ENCODE measurements at regions of chr9 and their contacts with region 1.

Region 1: DNA sequence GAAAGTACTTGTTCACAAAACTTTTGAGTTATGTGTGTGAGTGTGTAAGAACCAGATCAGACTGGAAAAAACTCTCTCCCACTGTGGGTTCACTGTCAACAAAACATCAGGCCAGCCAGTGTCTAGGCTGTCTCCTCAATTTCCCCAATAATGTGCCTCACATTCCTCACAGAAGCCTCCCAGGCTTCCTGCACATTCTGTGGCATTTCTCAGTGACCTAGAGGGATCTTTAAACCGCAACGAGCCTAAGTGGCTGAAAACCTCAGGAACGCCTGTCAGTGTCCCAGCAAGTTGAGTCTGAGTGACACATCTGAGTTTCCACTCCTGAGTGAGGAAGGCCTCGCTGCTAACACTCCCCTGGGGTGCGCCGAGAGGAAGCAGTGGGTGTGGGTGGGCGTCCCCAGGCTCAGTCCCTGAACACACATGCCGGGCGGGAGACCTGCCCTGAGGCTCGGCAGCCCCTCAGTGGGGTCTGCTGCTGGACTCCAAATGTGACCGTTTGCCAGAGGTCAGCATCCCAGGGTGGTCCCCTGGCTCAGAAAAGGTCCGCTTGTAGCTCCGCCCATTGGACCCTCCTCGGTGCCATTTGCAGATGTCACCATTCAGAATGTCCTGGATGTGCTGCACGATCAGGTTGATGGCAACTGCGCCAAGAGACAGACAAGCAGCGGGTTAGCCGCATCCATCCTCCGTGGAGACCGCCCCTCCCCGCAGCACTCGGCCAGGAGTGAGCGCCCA is 6.3 kb downstream of the UCK1 start:
- DNase-seq: no peak
- H3K4me3 ChIP-seq: no peak overlapping the region
- H3K27ac ChIP-seq: peak overlapping the region in 31 of 59 donors; percentile 1 to 88 (median 64)
- H3K27me3 ChIP-seq: no peaks in the 10 kb centered on the region
- CTCF ChIP-seq: no peak

Region 2: DNA sequence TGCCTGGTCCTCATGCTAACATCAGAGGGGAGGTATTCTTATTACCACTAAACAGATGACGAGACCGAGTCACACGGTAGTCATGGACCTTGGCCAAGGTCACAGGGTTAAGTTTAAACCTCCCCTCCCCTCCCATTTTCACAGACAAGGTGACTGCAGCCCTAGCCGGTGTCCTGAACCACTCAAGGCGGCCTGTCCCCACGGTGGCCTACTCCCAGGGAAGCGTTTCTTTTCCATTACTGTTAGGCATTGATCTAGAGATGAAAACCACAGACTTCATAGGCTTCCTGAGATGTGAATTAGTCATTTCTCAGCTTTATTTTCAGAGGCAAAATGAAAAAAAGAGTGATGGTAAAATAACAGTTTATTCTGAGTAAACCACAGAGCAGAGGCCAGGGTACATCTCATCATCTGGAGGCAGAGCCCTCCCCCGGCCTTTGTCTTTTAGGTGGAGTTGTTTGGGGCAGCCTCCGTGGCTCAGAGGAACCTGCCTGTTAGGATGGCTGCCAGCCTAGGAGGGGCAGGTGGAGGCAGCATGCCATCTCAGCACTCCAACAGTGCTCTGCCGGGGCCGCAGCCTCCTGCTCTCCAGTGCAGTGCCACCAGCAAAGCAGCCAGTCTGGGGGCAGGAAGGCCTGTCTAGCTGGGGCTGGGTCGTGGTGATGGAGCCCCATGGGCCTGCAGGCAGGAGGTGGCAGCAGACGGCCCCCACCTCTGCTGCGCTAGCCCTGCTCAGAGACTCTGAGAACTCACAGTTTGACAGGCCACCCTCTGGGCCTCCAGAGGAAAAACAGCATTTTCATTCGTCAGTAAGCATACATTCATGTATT is 143.9 kb after region 1 on chr9:
- intact Hi-C with region 1: no loop called
- DNase-seq: peak in 5 of 10 donors; percentile 36 to 74 (median 46)
- H3K4me3 ChIP-seq: peak overlapping the region in 3 of 59 donors; percentile 4 to 26 (median 12)
- H3K27ac ChIP-seq: peak overlapping the region in 57 of 59 donors; percentile 1 to 91 (median 77)
- H3K27me3 ChIP-seq: no peaks in the 10 kb centered on the region
- CTCF ChIP-seq: no peak

Region 3: DNA sequence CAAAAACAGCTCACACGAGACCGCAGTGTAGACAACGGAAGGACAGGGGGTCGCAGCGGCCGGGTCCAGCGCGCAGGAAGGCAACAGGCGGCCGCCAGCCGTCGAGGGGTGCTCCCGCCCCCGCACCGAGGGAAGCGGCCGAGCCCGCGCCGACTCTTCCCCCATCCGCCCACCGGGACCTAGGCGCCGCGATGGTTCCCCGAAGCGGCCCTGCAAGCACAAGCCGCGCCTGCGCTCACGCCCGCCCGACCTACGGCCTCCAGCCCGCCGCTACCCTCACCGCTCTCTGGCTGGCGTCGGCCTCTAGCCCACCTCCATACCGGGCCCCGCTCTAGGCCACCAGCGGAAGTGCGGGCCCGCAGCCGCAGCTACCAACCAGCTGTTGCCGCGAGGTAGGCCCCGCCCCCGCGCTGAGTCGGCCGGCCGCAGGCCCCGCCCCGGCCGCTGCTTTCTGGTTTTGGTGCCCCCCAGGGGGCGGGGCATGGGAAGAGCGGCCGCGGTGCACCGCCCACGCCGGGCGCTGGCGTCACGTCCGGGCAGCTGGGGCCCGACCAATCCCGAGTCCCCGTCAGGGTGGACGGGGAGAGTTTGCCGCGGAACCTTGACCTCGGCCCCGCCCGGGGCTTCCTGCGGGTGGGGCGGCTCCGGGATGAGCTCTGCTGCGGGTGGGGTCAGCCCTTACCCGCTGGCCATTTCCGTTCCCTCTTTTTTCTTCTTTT is 830.0 kb after region 1 on chr9 and contains the start of gene SETX:
- intact Hi-C with region 1: loop called in 1 of 2 experiments (anchors 10 kb)
- DNase-seq: peak; percentile 94 to 99 (median 97)
- H3K4me3 ChIP-seq: peak within 1 kb of the TSS; percentile 63 to 100 (median 97)
- H3K27ac ChIP-seq: peak within 1 kb of the TSS in 57 of 59 donors; percentile 14 to 94 (median 84)
- H3K27me3 ChIP-seq: no peaks in the 10 kb centered on the region
- CTCF ChIP-seq: peak in 29 of 56 donors; percentile 8 to 57 (median 29)
- total RNA-seq, gene SETX: 42.9 to 60.4 (median 50.0) TPM